ENCODE measurements at regions of chr1 and their contacts with region 1.

Region 1: GRCh38 chr1:235938709-235939479 is 72.2 kb upstream of the LYST start:
- DNase-seq: peak; percentile 43
- ATAC-seq: peak; percentile 88
- H3K4me3 ChIP-seq: no peak overlapping the region; the same call in 1 of the 2 replicates
- H3K27ac ChIP-seq: peak overlapping the region; percentile 35
- H3K4me1 ChIP-seq: peaks cover 20% of the 10 kb centered on the region
- H3K27me3 ChIP-seq: no peaks in the 10 kb centered on the region
- CTCF ChIP-seq: no peak
- EP300 ChIP-seq: no peak
- POLR2A ChIP-seq: no peak
- RAD21 ChIP-seq: no peak

Region 2: DNA sequence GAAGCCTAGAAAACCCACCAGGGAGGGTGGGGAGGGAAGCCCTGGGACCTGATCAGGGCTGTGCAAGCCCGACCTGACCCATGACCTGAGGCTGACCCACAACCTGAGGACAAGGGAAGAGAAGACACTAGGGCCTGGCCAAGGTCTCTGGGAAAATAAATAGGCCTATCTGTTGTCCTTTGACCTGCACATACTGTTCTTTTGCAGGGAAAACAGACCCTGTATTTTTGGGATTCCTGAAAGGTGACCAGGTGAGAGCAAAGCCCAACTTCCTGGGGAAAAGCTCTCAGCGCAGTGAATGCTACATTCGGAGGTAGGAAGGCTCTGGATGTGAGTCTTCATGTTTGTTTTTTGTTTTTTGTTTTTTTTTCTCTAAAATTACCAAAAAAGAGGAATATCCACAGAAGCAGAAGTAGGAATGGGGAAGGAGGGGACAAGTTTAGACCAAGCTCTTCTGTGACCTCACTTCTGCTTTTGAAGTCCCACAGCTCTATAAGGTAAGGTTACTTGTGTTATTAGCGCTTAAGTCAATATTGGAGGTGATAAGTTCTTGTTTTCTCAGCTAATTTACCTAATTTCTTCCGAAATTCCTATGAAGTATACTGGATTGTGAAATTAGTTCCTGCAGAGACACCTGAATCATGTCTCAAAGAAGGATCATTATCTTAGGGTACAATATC is 46.0 kb before region 1 on chr1:
- CTCF ChIA-PET with region 1: interaction called, 3 read pairs
- POLR2A ChIA-PET with region 1: interaction called, 6 read pairs
- RAD21 ChIA-PET with region 1: interaction called, 3 read pairs
- SMC1A ChIA-PET with region 1: interaction called, 6 read pairs
- in situ Hi-C with region 1: loop called (anchors 5 kb)
- intact Hi-C with region 1: loop called (anchors 5 kb)
- DNase-seq: no peak
- ATAC-seq: 0 out of 3 replicates have a peak, but pooled peaks have one; percentile 19
- H3K4me3 ChIP-seq: 0 out of 2 replicates have a peak overlapping the region, but pooled peaks have one; percentile 4
- H3K27ac ChIP-seq: peak overlapping the region; percentile 54; the same call in 1 of the 2 replicates
- H3K4me1 ChIP-seq: peaks cover 18% of the 10 kb centered on the region
- H3K27me3 ChIP-seq: no peaks in the 10 kb centered on the region
- CTCF ChIP-seq: no peak
- EP300 ChIP-seq: no peak
- POLR2A ChIP-seq: no peak
- RAD21 ChIP-seq: no peak

Region 3: GRCh38 chr1:236142253-236143103 is 203.6 kb after region 1 on chr1 and contains the start of gene GPR137B:
- CTCF ChIA-PET with region 1: no interaction called
- POLR2A ChIA-PET with region 1: no interaction called
- RAD21 ChIA-PET with region 1: no interaction called
- SMC1A ChIA-PET with region 1: no interaction called
- in situ Hi-C with region 1: no loop called
- intact Hi-C with region 1: no loop called
- DNase-seq: no peak
- ATAC-seq: peak; percentile 61
- H3K4me3 ChIP-seq: peak within 1 kb of the TSS; percentile 84
- H3K27ac ChIP-seq: peak within 1 kb of the TSS; percentile 62
- H3K4me1 ChIP-seq: peaks cover 17% of the 10 kb centered on the region
- H3K27me3 ChIP-seq: peaks cover 1 to 13% of the 10 kb centered on the region in 2 experiments
- CTCF ChIP-seq: no peak
- EP300 ChIP-seq: no peak
- POLR2A ChIP-seq: peak; percentile 63
- RAD21 ChIP-seq: no peak
- polyA plus RNA-seq, gene GPR137B: 5.4 to 6.4 TPM